ENCODE measurements at regions of chr2 and their contacts with region 1.

Region 1: GRCh38 chr2:203782262-203782976 is 76.0 kb downstream of the CD28 start:
- DNase-seq: no peak
- ATAC-seq: peak; percentile 53 to 83 (median 75)
- H3K4me3 ChIP-seq: no peak overlapping the region
- H3K27ac ChIP-seq: no peak overlapping the region
- H3K4me1 ChIP-seq: no peaks in the 10 kb centered on the region
- H3K27me3 ChIP-seq: no peaks in the 10 kb centered on the region
- CTCF ChIP-seq: peak; percentile 55

Region 2: GRCh38 chr2:203689426-203690116 is 92.8 kb before region 1 on chr2:
- intact Hi-C with region 1: loop called in 1 of 2 experiments (anchors 5 kb)
- DNase-seq: no peak
- ATAC-seq: no peak
- H3K4me3 ChIP-seq: no peak overlapping the region
- H3K27ac ChIP-seq: peak overlapping the region; percentile 84
- H3K4me1 ChIP-seq: peaks cover 62% of the 10 kb centered on the region
- H3K27me3 ChIP-seq: no peaks in the 10 kb centered on the region
- CTCF ChIP-seq: no peak